Dendritic cell treated with granulocyte-macrophage colony-stimulating factor and Interleukin-4, amounts not matched to agents 40 ng/mL and 50 ng/mL, for 4 days (primary cell): ENCODE measurements at regions of chr7 and their contacts with region 1.

Region 1: GRCh38 chr7:115996911-115997615 is 33.5 kb downstream of the TFEC start:
- H3K4me3 Mint-ChIP-seq: no peak overlapping the region
- H3K27ac Mint-ChIP-seq: peak overlapping the region; percentile 1
- H3K4me1 Mint-ChIP-seq: peaks cover 74% of the 10 kb centered on the region
- H3K27me3 Mint-ChIP-seq: no peaks in the 10 kb centered on the region

Region 2: DNA sequence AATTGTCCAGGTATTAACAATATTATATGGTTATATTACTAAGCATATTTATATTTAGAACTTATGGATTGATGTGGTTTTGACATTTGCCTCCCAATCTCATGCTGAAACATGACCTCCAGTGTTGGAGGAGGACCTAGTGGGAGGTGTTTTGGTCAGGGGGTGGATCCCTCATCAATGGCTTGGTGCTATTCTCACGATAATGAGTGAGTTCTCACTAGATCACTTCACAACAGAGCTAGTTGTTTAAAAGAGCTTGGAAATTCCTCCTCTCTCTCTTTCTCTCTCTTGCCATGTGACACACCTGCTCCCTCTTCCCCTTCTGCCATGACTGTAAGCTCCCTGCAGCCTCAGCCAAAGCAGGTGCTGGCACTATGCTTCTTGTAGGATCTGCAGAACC is 14.5 kb after region 1 on chr7:
- intact Hi-C with region 1: loop called (anchors 1 kb)
- H3K4me3 Mint-ChIP-seq: no peak overlapping the region
- H3K27ac Mint-ChIP-seq: no peak overlapping the region
- H3K4me1 Mint-ChIP-seq: peaks cover 19% of the 10 kb centered on the region
- H3K27me3 Mint-ChIP-seq: no peaks in the 10 kb centered on the region